Lower leg skin (tissue), 4 donors: ENCODE measurements at regions of chr10 and their contacts with region 1.

Region 1: DNA sequence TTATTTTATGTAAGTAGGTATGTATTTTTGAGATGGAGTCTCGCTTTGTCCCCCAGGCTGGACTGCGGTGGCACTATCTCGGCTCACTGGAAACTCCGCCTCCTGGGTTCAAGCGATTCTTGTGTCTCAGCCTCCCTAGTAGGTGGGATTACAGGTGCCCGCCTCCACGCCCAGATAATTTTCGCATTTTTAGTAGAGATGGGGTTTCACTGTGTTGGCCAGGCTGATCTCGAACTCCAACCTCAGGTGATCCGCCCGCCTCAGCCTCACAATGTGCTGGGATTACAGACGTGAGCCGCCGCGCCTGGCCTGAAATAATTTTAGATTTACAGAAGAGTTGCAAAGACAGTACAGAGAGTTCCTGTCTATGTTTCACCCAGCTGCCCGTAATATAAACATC is 37.5 kb downstream of the PFKFB3 start:
- DNase-seq: peak in 1 of 2 donors; percentile 82
- H3K4me3 ChIP-seq: no peak overlapping the region
- CTCF ChIP-seq: no peak
- POLR2A ChIP-seq: no peak

Region 2: DNA sequence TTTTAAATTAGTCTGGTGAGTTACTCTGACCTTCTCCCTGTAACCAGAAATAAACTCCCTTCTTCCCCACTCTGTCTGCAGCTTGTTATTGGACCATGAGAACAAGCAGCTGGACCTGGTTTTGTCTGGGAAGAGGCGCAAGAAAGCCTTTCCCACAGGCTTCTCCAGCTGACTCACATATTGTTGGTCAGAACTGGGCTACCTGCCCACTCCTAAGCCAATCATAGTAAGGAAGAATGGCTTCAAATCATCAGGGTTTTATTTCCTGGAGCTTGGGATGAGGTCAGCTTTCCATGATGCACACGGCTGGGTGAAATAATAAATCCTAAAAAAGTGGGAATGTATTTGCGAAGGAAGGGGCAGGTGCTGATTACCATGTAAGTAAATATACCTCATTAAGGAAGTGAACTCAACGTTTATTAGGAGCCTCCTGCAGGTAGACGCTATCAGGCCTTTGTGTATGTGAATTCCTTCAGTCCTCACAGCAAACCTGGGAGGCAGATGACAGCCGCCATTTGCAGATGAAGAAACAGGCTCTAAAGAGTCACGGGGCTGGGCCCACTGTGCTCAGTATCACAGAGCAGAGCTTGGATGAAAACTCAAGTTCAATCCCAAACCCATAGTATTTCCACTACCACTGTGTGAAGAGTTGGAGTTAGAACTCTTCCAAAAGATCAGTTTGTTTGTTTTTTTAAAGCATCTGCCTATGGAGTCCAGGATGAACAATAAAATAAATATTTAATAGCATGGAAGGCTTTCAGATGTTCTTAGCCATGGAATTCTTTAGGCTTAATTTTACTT is 295.7 kb before region 1 on chr10:
- intact Hi-C with region 1: no loop called
- DNase-seq: peak; percentile 91 to 94
- H3K4me3 ChIP-seq: no peak overlapping the region
- CTCF ChIP-seq: no peak
- POLR2A ChIP-seq: no peak

Region 3: DNA sequence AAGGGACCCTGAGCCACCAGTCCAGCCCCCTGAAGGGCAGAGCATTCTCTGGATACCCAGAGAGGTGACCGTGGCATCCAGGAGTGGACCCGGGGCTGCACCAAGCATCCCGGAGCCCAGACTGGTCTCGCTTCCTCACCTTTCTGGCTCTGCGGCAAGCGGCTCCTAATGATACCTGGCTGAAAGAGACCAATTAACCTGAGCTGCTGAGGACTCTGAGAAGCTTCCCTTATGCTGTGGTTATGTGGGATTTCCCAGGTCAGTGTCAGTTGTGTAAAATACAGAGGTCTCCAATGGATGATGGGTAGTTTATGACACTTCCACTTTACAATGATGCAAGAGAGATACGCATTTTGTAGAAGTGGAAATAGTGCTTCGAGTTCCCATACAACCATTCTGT is 13.9 kb after region 1 on chr10:
- intact Hi-C with region 1: no loop called
- DNase-seq: no peak
- H3K4me3 ChIP-seq: no peak overlapping the region
- CTCF ChIP-seq: no peak
- POLR2A ChIP-seq: no peak

Region 4: DNA sequence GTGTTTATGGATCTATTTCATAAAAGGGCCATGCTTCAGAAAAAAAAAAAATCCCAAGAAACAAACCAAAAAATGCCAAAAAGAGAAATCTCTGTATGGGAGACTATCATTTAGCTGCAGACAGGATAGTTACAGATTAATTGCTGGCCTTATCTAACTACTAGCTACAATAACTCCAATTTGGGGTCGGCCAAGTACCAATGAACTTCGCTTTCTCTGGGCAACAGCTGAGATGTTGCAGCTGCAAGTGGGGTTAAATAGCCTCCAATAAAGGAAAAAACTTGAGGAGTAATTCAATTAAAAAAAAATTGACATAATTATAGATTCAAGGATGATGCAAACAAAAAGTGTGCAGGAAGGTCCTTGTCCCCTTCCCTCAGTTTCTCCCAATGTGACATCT is 36.1 kb after region 1 on chr10:
- intact Hi-C with region 1: loop called (anchors 1 kb)
- DNase-seq: peak in 1 of 2 donors; percentile 42
- H3K4me3 ChIP-seq: no peak overlapping the region
- CTCF ChIP-seq: no peak
- POLR2A ChIP-seq: no peak